HepG2 (cell line): ENCODE measurements at regions of chr2 and their contacts with region 1.

Region 1: DNA sequence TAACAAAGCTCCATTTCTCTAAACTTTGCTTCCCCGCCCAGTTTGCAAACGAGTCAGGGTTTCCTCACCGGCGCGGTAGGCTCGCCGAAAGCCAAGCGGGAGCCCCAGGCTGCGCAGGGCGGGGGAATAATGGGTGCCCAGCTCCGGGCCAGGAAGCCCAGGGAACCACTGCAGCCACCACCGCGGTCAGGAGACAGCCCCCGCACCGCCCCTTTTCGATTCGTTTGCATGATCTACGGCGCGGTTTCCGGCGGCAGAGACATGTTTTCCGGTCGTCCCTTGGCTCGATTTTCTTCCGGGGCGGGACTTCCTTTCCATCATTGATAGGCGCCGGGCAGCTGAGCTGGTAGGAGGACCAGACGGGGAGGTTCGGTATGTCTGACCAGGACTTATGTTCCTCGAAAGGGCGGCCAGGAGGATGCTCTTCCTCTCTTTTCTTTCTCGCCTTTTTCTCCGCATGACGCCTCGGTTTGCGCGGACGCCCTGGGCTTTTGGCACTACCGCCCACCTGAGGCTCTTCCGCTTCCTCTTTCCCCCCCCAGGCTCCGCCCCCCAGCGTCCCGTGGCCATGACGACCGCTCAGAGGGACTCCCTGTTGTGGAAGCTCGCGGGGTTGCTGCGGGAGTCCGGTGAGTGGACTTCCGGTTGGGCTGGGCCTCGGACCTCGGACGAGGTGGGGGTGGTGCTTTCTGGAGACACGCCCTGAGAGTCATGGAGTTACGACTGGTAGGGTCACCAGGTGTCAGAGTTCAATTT is at the start of gene STK11IP:
- DNase-seq: peak; percentile 99
- ATAC-seq: peak; percentile 96
- H3K4me3 ChIP-seq: peak within 1 kb of the TSS; percentile 72 to 91 (median 81)
- H3K27ac ChIP-seq: peak within 1 kb of the TSS; percentile 95
- H3K4me1 ChIP-seq: peaks cover 53% of the 10 kb centered on the region
- H3K27me3 ChIP-seq: no peaks in the 10 kb centered on the region; a peak in 1 of 5 replicates
- CTCF ChIP-seq: peak; percentile 27
- EP300 ChIP-seq: peak; percentile 16 to 61; a peak in 2 of 4 replicates
- POLR2A ChIP-seq: peak; percentile 89 to 96
- RAD21 ChIP-seq: peak; percentile 47; the same call in 1 of the 2 replicates
- total RNA-seq, gene STK11IP: 5.6 and 12.8 TPM in 2 replicates

Region 2: GRCh38 chr2:219388127-219388844 is 209.4 kb before region 1 on chr2:
- CTCF ChIA-PET with region 1: no interaction called
- POLR2A ChIA-PET with region 1: interaction called, 22 read pairs
- in situ Hi-C with region 1: no loop called
- intact Hi-C with region 1: loop called (anchors 5 kb)
- DNase-seq: peak; percentile 87
- ATAC-seq: peak; percentile 74
- H3K4me3 ChIP-seq: peak overlapping the region; percentile 53 to 70 (median 68)
- H3K27ac ChIP-seq: peak overlapping the region; percentile 68
- H3K4me1 ChIP-seq: peaks cover 30% of the 10 kb centered on the region
- H3K27me3 ChIP-seq: no peaks in the 10 kb centered on the region; a peak in 1 of 5 replicates
- CTCF ChIP-seq: peak; percentile 78
- EP300 ChIP-seq: peak in 1 of 2 experiments; percentile 12; a peak in 1 of 4 replicates
- POLR2A ChIP-seq: peak; percentile 52 to 68; a peak in 3 of 4 replicates
- RAD21 ChIP-seq: peak; percentile 67; the same call in 1 of the 2 replicates

Region 3: GRCh38 chr2:219543601-219544358 is 54.0 kb before region 1 on chr2 and contains the starts of genes CHPF and TMEM198:
- CTCF ChIA-PET with region 1: interaction called, 12 read pairs
- POLR2A ChIA-PET with region 1: interaction called, 44 read pairs
- in situ Hi-C with region 1: no loop called
- intact Hi-C with region 1: loop called (anchors 1 kb)
- DNase-seq: peak; percentile 99
- ATAC-seq: peak; percentile 78
- H3K4me3 ChIP-seq: peak within 1 kb of the TSS; percentile 87 to 90 (median 89)
- H3K27ac ChIP-seq: peak within 1 kb of the TSS; percentile 82
- H3K4me1 ChIP-seq: peaks cover 51% of the 10 kb centered on the region
- H3K27me3 ChIP-seq: no peaks in the 10 kb centered on the region; a peak in 1 of 5 replicates
- CTCF ChIP-seq: peak; percentile 31; the same call in 1 of the 2 replicates
- EP300 ChIP-seq: peak in 1 of 2 experiments; percentile 59; a peak in 1 of 4 replicates
- POLR2A ChIP-seq: peak in 1 of 2 experiments; percentile 71; a peak in 2 of 4 replicates
- RAD21 ChIP-seq: peak; percentile 47
- total RNA-seq, gene CHPF: 34.7 and 79.6 TPM in 2 replicates
- total RNA-seq, gene TMEM198: 11.6 and 17.3 TPM in 2 replicates

Region 4: GRCh38 chr2:219560037-219560892 is 37.5 kb before region 1 on chr2:
- CTCF ChIA-PET with region 1: no interaction called
- POLR2A ChIA-PET with region 1: interaction called, 31 read pairs
- in situ Hi-C with region 1: loop called (anchors 5 kb)
- intact Hi-C with region 1: loop called (anchors 5 kb)
- DNase-seq: no peak
- ATAC-seq: peak; percentile 18
- H3K4me3 ChIP-seq: no peak overlapping the region
- H3K27ac ChIP-seq: no peak overlapping the region
- H3K4me1 ChIP-seq: peaks cover 35% of the 10 kb centered on the region
- H3K27me3 ChIP-seq: no peaks in the 10 kb centered on the region
- CTCF ChIP-seq: peak; percentile 62
- EP300 ChIP-seq: no peak
- POLR2A ChIP-seq: no peak
- RAD21 ChIP-seq: no peak

Region 5: DNA sequence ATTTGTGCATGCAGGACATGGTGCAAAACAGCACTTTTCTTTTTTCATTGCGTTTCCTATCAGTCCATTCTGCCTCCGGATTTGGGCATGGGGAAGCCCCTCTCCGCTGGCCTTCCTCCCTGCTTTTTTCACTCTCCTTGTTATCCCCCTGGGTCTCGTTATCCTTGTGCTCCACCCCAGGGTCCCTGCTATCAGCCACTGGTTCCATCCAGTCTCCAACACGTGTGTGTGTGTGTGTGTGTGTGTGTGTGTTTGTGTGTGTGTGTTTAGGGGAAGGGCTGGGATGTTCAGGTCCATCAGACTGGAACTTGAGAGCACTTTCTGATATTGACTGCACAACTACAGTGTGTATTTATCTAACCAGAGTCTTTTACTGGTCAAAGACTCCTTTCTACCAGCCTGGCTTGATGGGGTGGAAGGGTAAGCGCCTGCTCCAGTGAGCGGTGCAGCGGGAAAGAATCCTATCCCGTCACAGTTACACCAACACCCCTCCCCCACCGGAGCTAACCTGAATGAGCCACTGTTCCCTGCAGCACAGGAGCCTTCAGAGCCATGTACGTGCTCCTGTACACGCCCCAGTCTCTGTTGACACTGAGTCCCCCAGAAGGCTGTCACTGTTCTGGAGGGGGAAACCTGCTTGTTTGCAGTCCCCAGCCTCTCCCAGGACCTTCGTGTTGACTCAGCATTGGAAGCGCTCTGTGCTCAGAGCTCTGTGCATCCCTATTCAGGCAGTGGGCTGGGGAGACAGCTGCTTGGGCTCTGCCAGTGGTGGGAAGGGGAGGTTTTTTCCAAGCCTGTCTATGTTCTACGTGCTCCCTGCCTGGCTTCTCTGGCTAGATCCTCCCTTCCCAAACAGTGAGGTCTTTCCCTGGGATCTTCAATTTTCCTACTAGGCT is 21.0 kb before region 1 on chr2:
- CTCF ChIA-PET with region 1: no interaction called
- POLR2A ChIA-PET with region 1: interaction called, 150 read pairs
- in situ Hi-C with region 1: no loop called
- intact Hi-C with region 1: loop called (anchors 1 kb)
- DNase-seq: peak; percentile 100
- ATAC-seq: peak; percentile 94
- H3K4me3 ChIP-seq: peak overlapping the region in 2 of 3 experiments; percentile 23 to 45; a peak in 3 of 6 replicates
- H3K27ac ChIP-seq: peak overlapping the region; percentile 86
- H3K4me1 ChIP-seq: peaks cover 81% of the 10 kb centered on the region
- H3K27me3 ChIP-seq: no peaks in the 10 kb centered on the region
- CTCF ChIP-seq: peak; percentile 32; the same call in 1 of the 2 replicates
- EP300 ChIP-seq: peak; percentile 61 to 96; a peak in 3 of 4 replicates
- POLR2A ChIP-seq: no peak; a peak in 1 of 4 replicates
- RAD21 ChIP-seq: peak; percentile 55; the same call in 1 of the 2 replicates

Region 6: DNA sequence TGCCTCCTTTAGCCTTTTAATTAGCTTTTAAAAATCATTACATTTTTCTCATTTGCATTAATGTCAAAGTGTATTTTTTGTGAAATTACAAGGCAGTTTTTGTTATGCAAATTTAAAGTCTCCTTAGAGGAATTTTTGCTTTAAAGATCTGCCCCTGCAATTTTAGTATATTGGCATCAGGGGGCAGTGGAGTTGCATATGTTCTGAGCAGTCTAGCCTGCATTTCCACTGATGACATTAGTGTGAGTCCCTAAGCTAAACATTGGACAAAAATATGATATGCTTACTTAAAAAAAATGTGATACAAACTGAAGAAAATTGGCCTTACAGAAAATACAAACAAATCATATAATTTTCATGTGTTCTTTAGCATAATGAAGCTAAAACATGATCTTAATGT is 456.2 kb after region 1 on chr2:
- CTCF ChIA-PET with region 1: no interaction called
- POLR2A ChIA-PET with region 1: no interaction called
- in situ Hi-C with region 1: no loop called
- intact Hi-C with region 1: no loop called
- DNase-seq: no peak
- ATAC-seq: no peak
- H3K4me3 ChIP-seq: no peak overlapping the region
- H3K27ac ChIP-seq: no peak overlapping the region
- H3K4me1 ChIP-seq: no peaks in the 10 kb centered on the region
- H3K27me3 ChIP-seq: peaks cover 0 to 1% of the 10 kb centered on the region in 2 experiments; a peak in 2 of 5 replicates
- CTCF ChIP-seq: peak; percentile 25; the same call in 1 of the 2 replicates
- EP300 ChIP-seq: no peak
- POLR2A ChIP-seq: no peak
- RAD21 ChIP-seq: no peak